K562 (cell line): ENCODE measurements at regions of chr17 and their contacts with region 1.

Region 1: DNA sequence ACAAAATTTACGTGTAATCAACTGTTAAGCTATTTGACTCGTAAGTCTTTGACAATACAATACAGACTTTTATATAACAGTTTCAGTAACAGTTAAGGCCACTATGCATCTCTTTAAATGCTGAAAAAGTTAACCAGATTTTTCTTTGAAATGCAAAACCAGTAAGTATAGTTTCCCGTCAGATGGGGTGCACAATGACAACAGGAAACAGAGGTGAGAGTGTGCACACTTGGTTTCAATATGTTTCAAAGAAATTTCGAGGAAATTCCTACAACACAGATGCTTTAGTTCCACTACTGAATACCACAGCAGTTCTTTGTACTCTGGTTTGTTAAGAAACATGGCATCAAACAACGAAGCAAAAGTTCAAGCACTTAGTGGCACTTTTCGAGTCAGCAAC is 48.4 kb downstream of the RNF157 start:
- DNase-seq: no peak
- ATAC-seq: no peak
- H3K4me3 ChIP-seq: no peak overlapping the region
- H3K27ac ChIP-seq: peak overlapping the region; percentile 1; the same call in 1 of the 3 replicates
- H3K4me1 ChIP-seq: peaks cover 44 to 63% of the 10 kb centered on the region in 2 experiments
- H3K27me3 ChIP-seq: no peaks in the 10 kb centered on the region
- CTCF ChIP-seq: no peak
- EP300 ChIP-seq: no peak
- POLR2A ChIP-seq: no peak
- RAD21 ChIP-seq: no peak

Region 2: DNA sequence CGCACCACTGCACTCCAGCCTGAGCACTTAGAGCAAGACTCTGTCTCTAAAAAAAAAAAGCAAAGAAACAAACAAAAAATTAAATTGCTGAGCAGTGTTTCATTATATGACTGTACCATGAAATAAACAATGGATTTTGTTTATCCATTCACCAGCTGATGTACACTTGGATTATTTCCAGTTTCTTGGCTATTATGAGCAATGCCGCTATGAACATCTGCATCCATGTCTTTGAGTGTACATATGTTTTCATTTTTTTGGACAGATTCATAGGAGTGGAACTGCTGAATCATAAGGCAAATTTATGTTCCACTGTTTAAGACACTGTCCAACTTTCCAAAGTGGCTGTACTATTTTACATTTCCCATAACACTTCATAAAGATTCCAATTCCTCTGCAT is 40.4 kb after region 1 on chr17:
- CTCF ChIA-PET with region 1: no interaction called
- POLR2A ChIA-PET with region 1: no interaction called
- in situ Hi-C with region 1: no loop called
- intact Hi-C with region 1: loop called (anchors 2 kb)
- DNase-seq: no peak
- ATAC-seq: no peak
- H3K4me3 ChIP-seq: no peak overlapping the region
- H3K27ac ChIP-seq: peak overlapping the region; percentile 23; the same call in 1 of the 3 replicates
- H3K4me1 ChIP-seq: peaks cover 19% of the 10 kb centered on the region in 2 experiments; a peak in 4 of 5 replicates
- H3K27me3 ChIP-seq: no peaks in the 10 kb centered on the region
- CTCF ChIP-seq: no peak
- EP300 ChIP-seq: no peak
- POLR2A ChIP-seq: no peak
- RAD21 ChIP-seq: no peak